GM10248 (cell line): ENCODE measurements at regions of chr6 and their contacts with region 1.

Region 1: GRCh38 chr6:137497721-137498463 is 3.7 kb upstream of the OLIG3 start:
- DNase-seq: no peak
- CTCF ChIP-seq: no peak

Region 2: DNA sequence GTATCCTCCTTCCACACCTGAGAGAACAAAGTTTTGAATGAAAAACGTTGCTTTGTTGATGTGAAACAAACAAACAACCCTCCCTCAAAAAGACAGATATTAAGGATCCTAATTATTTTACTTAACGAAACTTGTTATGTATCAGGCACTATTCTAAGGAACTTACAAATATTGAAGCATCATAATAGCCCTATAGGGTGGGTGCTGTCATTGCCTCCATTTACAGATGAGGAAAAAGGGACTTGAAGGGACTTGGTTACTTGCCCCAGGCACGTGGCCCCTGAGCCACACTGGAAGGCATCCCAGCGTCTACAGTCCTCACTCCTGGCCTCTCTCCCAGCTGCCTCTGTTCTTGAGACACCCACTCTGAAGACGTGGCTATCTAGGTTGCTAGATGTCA is 16.5 kb after region 1 on chr6:
- CTCF ChIA-PET with region 1: interaction called, 11 read pairs
- POLR2A ChIA-PET with region 1: no interaction called
- DNase-seq: no peak
- CTCF ChIP-seq: no peak